GM10248 (cell line): ENCODE measurements at regions of chr16 and their contacts with region 1.

Region 1: DNA sequence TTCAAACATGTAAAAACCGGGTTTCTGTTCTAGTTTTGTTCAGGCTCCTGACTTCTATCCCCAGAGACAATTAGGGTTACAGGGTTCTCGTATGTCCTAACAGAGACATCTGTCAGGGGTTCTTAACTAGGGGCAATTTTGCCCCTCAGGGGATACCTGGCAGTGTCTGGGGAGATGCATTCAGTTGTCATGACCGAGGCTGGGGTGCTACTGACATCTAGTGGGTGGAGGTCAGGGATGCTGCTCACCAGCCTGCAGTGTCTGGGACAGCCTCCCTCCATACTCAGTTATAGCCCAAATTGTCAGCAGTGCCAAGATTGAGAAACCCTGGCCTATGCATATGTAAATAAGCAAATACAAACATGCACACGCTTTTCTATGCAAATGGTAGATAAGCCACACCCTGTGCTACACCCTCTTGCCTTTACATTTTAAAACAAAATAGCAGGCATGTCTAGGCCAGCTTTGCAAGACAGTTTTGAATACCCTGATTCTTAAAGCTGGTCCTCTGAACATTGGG is 37.4 kb downstream of the CLEC16A start:
- DNase-seq: peak; percentile 71
- CTCF ChIP-seq: peak; percentile 76

Region 2: GRCh38 chr16:10971560-10971961 is 10.2 kb before region 1 on chr16:
- CTCF ChIA-PET with region 1: interaction called, 124 read pairs
- POLR2A ChIA-PET with region 1: no interaction called
- DNase-seq: peak; percentile 48
- CTCF ChIP-seq: peak; percentile 64